ENCODE measurements at regions of chr5 and their contacts with region 1.

Region 1: GRCh38 chr5:137328463-137328862 is 170.7 kb downstream of the SPOCK1 start:
- DNase-seq: no peak
- H3K4me3 ChIP-seq: no peak overlapping the region
- CTCF ChIP-seq: no peak
- POLR2A ChIP-seq: no peak

Region 2: GRCh38 chr5:137498736-137499505 is 170.5 kb after region 1 on chr5 and contains the start of gene SPOCK1:
- intact Hi-C with region 1: loop called (anchors 5 kb)
- DNase-seq: peak; percentile 35 to 91
- H3K4me3 ChIP-seq: peak within 1 kb of the TSS; percentile 22
- CTCF ChIP-seq: no peak
- POLR2A ChIP-seq: no peak
- total RNA-seq, gene SPOCK1: 7.9 to 21.5 (median 11.7) TPM

Measured in lower leg skin (tissue), 4 donors.